GM18951 (cell line): ENCODE measurements at regions of chr3 and their contacts with region 1.

Region 1: DNA sequence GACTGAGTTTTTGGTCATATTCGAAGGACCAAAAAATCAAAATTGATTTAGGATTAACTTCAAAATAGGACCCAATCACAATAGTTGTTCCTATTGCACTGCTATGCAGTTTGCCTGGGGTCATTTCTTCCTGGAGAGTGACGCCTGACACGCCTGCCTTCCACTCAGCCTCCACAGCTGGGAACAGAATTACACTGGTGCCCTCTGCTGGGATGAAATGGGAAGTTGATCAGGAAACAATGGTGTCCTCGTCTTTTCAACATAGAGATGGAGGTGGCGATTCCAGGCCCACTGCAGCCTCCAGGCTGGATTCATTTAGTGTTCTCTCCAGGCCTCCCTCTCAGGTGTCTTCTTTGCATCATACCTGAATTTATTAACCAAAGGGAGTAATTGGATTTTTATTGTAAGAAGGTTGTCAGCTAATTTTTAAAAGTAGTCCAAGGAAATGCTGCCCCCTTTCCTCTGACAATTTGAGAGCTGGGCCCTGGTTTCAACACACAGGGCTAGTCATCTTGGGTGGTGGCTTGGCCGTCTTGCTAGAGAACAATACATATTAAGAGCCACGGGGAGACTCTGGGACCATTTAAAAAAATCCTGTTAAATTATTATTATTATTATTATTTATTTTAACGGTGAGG is 69.7 kb downstream of the GAP43 start:
- POLR2A ChIP-seq: no peak

Region 2: GRCh38 chr3:113783980-113784379 is 1909.0 kb before region 1 on chr3:
- in situ Hi-C with region 1: no loop called
- POLR2A ChIP-seq: no peak

Region 3: DNA sequence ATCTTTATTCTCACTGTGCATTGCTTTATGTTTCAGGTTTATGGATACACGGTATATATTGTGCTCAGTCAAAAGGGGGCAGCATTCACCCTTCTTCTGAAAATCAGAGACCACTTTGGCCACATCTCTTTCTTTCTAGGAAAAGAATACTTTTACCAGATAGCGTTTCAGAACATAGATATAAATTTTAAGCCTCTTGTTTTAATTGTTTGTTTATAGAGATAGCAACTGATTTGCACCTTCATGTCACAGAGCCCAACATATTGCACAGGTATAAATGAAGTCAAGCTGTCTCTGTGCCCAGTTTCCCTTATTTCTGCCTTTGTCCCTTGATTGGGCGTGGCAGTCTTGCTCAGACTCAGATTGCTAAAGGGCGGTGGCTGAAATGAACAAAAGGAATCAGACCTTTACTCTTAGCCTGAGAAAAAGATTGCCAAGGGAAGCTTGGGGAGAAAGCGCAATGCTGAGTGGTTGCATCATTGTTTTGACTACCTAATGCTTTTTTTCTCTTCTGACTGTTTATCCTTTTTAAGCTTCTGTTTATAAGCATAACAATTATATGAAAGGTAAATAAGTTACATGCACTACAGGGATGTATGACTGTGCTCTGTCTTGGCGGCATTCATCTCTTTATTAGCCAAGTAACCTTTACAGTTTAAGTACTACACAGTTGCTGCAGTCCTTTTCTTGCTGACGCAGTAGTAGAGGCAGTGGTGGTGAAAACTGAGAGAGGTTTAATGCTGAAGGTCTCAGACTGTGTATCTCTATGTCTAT is 475.1 kb before region 1 on chr3:
- in situ Hi-C with region 1: loop called (anchors 25 kb)
- POLR2A ChIP-seq: no peak

Region 4: GRCh38 chr3:116140100-116140689 is 447.2 kb after region 1 on chr3:
- in situ Hi-C with region 1: no loop called
- POLR2A ChIP-seq: no peak